ENCODE measurements at regions of chr16 and their contacts with region 1.

Region 1: DNA sequence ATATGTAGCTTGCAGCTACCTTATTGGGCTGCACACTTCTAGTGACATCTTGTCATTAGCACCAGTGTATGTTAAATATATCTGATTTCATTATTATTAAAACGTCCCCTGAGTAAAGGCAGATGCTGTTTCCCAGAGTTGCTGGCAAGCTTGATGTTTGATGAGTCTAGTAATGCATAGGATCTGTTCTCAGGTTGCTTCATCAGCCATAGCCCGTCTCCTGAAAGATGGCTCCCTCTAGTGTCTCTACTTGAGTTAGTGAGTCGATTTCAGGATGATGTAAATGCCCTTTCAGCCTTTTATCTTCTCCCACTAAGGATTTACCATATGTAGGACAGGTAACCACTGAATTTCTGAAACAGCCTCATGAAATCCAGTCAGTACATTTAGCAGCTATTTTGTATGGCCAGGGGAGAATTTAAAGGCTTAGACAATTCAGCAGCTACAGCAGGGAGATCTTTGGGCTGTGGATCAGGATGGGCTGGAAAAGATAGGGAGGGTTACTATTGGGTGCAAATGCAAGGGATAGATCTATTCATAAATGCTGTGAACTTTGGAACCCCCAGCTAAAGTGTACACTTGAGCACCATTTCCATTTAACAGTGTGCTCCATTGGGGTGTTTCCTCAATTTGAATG is 376.3 kb downstream of the CNTNAP4 start:
- DNase-seq: peak; percentile 27
- CTCF ChIP-seq: peak; percentile 60

Region 2: GRCh38 chr16:76278980-76279379 is 374.5 kb before region 1 on chr16:
- CTCF ChIA-PET with region 1: interaction called, 14 read pairs
- POLR2A ChIA-PET with region 1: no interaction called
- DNase-seq: no peak
- CTCF ChIP-seq: no peak

Region 3: GRCh38 chr16:76665571-76666275 is 12.2 kb after region 1 on chr16:
- CTCF ChIA-PET with region 1: interaction called, 18 read pairs
- POLR2A ChIA-PET with region 1: no interaction called
- DNase-seq: no peak
- CTCF ChIP-seq: no peak

Region 4: DNA sequence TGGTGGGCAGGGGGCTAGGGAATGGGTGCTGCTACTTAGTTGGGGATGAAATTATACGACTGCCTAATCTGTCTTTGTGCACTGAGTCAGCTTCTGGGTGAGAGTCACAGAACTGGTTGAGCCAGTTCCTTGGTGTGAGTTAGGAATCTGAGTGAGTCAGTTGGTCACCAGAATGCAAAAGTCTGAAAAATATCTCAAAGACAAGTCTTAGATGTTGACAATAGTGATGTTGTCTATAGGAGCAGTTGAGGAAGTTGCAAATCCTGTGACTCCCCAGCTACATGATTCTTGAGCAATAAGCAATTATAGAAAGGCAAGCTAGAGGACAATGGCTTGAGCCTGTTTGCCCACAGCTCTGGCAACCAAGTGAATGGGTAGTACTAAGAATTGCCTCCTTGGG is 22.8 kb after region 1 on chr16:
- CTCF ChIA-PET with region 1: interaction called, 12 read pairs
- POLR2A ChIA-PET with region 1: no interaction called
- DNase-seq: no peak
- CTCF ChIP-seq: no peak

Region 5: GRCh38 chr16:76796416-76796815 is 142.9 kb after region 1 on chr16:
- CTCF ChIA-PET with region 1: no interaction called
- POLR2A ChIA-PET with region 1: no interaction called
- DNase-seq: no peak
- CTCF ChIP-seq: no peak

Measured in GM10248 (cell line).